WTC11 (cell line): ENCODE measurements at regions of chr1 and their contacts with region 1.

Region 1: DNA sequence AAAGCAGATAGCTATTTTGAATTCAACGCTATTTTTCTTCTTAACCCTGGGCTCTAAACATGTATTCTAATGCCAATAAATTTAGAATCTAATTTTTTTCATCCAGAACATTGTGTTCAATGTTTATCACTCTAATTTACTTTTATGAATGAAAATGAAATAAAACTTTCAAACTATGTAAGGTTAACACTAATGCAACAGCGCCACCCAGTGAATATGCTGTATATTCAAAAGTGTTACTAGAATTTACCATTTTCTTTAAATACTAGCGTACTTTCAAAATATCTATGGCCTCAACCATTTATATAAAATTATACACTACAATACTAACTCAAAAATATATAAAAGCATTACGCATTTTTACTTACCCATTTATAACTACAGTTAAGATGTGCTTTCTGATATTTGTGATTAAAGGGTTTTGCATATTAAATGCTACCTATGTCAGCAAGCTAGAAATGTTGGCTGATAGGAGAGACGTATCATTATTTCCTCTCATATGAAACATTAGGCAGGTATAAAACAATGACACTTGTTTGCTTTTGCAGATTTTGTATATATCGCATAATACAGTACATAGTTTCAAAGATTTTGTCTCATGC is 5.9 kb upstream of the NUF2 start:
- DNase-seq: no peak
- ATAC-seq: no peak
- H3K4me3 Mint-ChIP-seq: no peak overlapping the region
- H3K27ac Mint-ChIP-seq: no peak overlapping the region
- H3K4me1 Mint-ChIP-seq: peaks cover 3% of the 10 kb centered on the region
- H3K27me3 Mint-ChIP-seq: no peaks in the 10 kb centered on the region
- CTCF ChIP-seq: peak; percentile 45; the same call in 1 of the 2 replicates

Region 2: GRCh38 chr1:162847839-162848453 is 467.9 kb before region 1 on chr1:
- CTCF ChIA-PET with region 1: interaction called, 11 read pairs
- POLR2A ChIA-PET with region 1: no interaction called
- DNase-seq: peak; percentile 86
- ATAC-seq: peak; percentile 47
- H3K4me3 Mint-ChIP-seq: no peak overlapping the region
- H3K27ac Mint-ChIP-seq: no peak overlapping the region
- H3K4me1 Mint-ChIP-seq: no peaks in the 10 kb centered on the region
- H3K27me3 Mint-ChIP-seq: no peaks in the 10 kb centered on the region; the same call in 1 of the 2 replicates
- CTCF ChIP-seq: peak; percentile 80; the same call in 1 of the 2 replicates

Region 3: GRCh38 chr1:162854245-162854882 is 461.5 kb before region 1 on chr1:
- CTCF ChIA-PET with region 1: interaction called, 11 read pairs
- POLR2A ChIA-PET with region 1: no interaction called
- DNase-seq: peak; percentile 60
- ATAC-seq: peak; percentile 82
- H3K4me3 Mint-ChIP-seq: no peak overlapping the region
- H3K27ac Mint-ChIP-seq: no peak overlapping the region
- H3K4me1 Mint-ChIP-seq: no peaks in the 10 kb centered on the region
- H3K27me3 Mint-ChIP-seq: no peaks in the 10 kb centered on the region
- CTCF ChIP-seq: peak; percentile 41

Region 4: GRCh38 chr1:162878000-162878596 is 437.8 kb before region 1 on chr1:
- CTCF ChIA-PET with region 1: interaction called, 26 read pairs
- POLR2A ChIA-PET with region 1: no interaction called
- DNase-seq: peak; percentile 83
- ATAC-seq: peak; percentile 94
- H3K4me3 Mint-ChIP-seq: no peak overlapping the region
- H3K27ac Mint-ChIP-seq: no peak overlapping the region
- H3K4me1 Mint-ChIP-seq: peaks cover 14% of the 10 kb centered on the region
- H3K27me3 Mint-ChIP-seq: no peaks in the 10 kb centered on the region
- CTCF ChIP-seq: peak; percentile 71